Calu3 (cell line): ENCODE measurements at regions of chr7 and their contacts with region 1.

Region 1: DNA sequence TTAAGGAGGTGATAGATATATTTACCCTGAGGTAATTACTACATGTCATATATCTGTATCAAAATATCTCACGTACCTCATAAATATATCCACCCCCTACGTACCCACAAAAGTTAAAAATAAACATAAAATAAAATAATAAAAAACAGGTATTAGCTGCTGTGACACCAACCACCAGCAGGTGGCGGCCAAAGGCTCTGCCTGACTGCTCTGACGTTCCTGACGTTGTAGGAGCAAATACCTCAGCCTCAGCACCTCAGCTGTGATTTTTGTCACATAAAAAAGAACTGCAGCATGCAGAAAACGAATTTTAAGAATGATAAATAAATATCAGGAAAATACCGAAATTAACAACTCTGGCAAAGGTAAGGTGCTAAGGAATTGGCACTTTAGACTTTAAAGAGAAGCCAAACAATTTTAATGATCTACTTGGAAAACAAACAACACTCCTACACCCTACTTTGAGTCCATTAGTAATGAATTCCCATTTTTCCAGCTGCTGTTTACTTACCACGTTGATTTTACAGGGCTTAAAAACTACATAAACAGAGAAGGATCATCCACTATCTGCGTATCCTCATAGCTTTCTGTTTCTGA is 125.4 kb upstream of the TARP start:
- DNase-seq: peak; percentile 72
- H3K4me3 Mint-ChIP-seq: no peak overlapping the region
- H3K27ac Mint-ChIP-seq: no peak overlapping the region
- H3K4me1 Mint-ChIP-seq: no peaks in the 10 kb centered on the region
- H3K27me3 Mint-ChIP-seq: peaks cover 66% of the 10 kb centered on the region
- CTCF ChIP-seq: peak; percentile 77

Region 2: GRCh38 chr7:38335492-38336147 is 63.2 kb before region 1 on chr7:
- CTCF ChIA-PET with region 1: no interaction called
- intact Hi-C with region 1: loop called (anchors 10 kb)
- DNase-seq: peak; percentile 93
- H3K4me3 Mint-ChIP-seq: no peak overlapping the region
- H3K27ac Mint-ChIP-seq: no peak overlapping the region
- H3K4me1 Mint-ChIP-seq: peaks cover 9% of the 10 kb centered on the region
- H3K27me3 Mint-ChIP-seq: no peaks in the 10 kb centered on the region
- CTCF ChIP-seq: peak; percentile 98

Region 3: DNA sequence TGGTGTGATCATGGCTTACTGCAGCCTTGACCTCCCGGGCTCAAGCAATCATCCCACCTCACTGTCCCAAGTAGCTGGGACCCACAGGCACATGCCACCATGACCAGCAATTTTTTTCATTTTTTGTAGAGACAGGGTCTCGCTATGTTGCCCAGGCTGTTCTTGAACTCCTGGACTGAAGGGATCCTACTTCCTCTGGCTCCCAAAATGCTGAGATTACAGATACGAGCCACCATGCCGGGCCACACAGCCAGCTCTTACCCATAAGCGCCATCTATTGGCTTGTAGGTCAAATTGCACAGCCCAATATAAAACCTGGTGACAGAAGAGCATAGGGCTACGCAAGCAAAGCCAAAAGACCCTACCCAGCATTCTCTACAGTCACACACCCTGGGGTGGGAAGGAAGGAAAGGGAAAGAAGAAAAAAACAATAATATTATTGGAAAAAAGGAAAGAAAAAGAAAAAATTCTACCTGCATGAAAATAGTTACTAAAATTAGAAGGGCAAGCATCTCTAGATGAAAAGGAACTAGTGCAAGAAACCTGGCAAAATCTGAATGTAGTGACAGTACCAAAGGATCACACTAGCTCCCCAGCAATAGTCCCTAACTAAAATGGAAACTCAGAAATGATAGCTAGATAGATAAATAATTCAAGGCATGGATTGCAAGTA is 261.7 kb after region 1 on chr7:
- CTCF ChIA-PET with region 1: no interaction called
- intact Hi-C with region 1: loop called (anchors 1 kb)
- DNase-seq: peak; percentile 43
- H3K4me3 Mint-ChIP-seq: no peak overlapping the region
- H3K27ac Mint-ChIP-seq: no peak overlapping the region
- H3K4me1 Mint-ChIP-seq: no peaks in the 10 kb centered on the region
- H3K27me3 Mint-ChIP-seq: peaks cover 89% of the 10 kb centered on the region
- CTCF ChIP-seq: peak; percentile 68

Region 4: GRCh38 chr7:39465055-39465929 is 1066.5 kb after region 1 on chr7:
- CTCF ChIA-PET with region 1: no interaction called
- intact Hi-C with region 1: loop called (anchors 5 kb)
- DNase-seq: peak; percentile 75
- H3K4me3 Mint-ChIP-seq: peak overlapping the region; percentile 36
- H3K27ac Mint-ChIP-seq: no peak overlapping the region
- H3K4me1 Mint-ChIP-seq: peaks cover 15% of the 10 kb centered on the region
- H3K27me3 Mint-ChIP-seq: no peaks in the 10 kb centered on the region
- CTCF ChIP-seq: peak; percentile 79

Region 5: DNA sequence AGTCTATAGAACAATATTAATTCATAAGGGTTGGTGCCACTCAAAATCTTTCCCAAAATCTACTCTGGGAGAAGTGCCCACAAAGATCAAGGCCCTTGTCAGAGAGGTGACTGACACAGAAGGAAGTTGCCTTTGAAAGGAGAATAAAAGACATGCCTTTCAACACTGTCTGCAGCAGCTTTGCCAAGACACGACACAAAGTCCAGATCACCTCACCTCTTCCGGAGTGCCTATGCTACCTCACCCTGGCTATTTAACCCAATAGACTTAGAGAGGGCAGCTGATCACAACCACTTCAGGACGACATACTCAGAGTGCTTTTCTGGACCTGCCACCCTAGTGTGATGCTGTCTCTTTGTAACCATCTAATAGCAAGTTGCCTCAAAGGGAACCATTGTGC is 1118.4 kb after region 1 on chr7:
- CTCF ChIA-PET with region 1: no interaction called
- intact Hi-C with region 1: loop called (anchors 1 kb)
- DNase-seq: no peak
- H3K4me3 Mint-ChIP-seq: no peak overlapping the region
- H3K27ac Mint-ChIP-seq: no peak overlapping the region
- H3K4me1 Mint-ChIP-seq: no peaks in the 10 kb centered on the region
- H3K27me3 Mint-ChIP-seq: peaks cover 7% of the 10 kb centered on the region
- CTCF ChIP-seq: no peak